ENCODE measurements at regions of chr6 and their contacts with region 1.

Region 1: GRCh38 chr6:37845026-37845911 is 25.7 kb downstream of the ZFAND3 start:
- DNase-seq: no peak
- H3K4me3 ChIP-seq: no peak overlapping the region
- H3K27ac ChIP-seq: no peak overlapping the region
- H3K4me1 ChIP-seq: 0 out of 4 replicates have a peak, but pooled peaks cover 0 to 4% of the 10 kb centered on the region in 2 experiments
- H3K27me3 ChIP-seq: no peaks in the 10 kb centered on the region
- CTCF ChIP-seq: no peak
- EP300 ChIP-seq: no peak
- RAD21 ChIP-seq: no peak

Region 2: DNA sequence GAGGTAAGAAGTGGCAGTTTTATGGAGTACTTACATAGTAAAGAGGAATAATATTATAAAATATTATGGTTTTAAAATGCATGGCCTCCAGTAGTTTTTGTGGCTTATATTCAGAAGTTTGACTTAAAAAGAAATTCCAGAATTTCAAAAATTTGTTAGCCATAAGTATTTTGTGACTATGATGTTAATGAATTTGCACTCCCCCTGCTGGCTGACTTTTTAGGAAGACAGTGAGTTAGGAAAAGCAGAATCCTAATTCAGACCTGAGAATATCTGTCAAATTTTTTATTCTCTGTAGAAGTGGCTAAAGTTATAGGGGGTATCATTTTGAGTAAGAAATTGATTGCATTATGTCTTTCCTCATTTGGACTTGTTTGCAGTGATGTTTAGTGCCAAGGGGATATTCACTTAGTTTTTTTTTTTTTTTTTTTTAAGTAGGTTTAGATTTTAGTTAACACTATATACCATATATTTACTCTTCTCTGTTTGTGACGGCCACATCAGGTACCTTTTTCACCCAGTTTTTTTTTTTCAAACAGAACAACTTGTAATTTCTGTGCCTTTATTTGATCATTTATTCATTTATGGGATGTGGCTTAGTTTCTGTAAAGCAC is 15.1 kb after region 1 on chr6:
- CTCF ChIA-PET with region 1: interaction called, 12 read pairs
- POLR2A ChIA-PET with region 1: no interaction called
- DNase-seq: peak; percentile 31
- H3K4me3 ChIP-seq: no peak overlapping the region
- H3K27ac ChIP-seq: no peak overlapping the region
- H3K4me1 ChIP-seq: peaks cover 11 to 14% of the 10 kb centered on the region in 2 experiments; a peak in 3 of 4 replicates
- H3K27me3 ChIP-seq: no peaks in the 10 kb centered on the region
- CTCF ChIP-seq: peak; percentile 81
- EP300 ChIP-seq: no peak
- RAD21 ChIP-seq: peak; percentile 63